Activated CD4-positive, alpha-beta memory T cell treated with anti-CD3 and anti-CD28 coated beads, Interleukin-2, amount 10 ng/mL, durations not matched to agents 7 days and 5 days (primary cell): ENCODE measurements at regions of chr6 and their contacts with region 1.

Region 1: DNA sequence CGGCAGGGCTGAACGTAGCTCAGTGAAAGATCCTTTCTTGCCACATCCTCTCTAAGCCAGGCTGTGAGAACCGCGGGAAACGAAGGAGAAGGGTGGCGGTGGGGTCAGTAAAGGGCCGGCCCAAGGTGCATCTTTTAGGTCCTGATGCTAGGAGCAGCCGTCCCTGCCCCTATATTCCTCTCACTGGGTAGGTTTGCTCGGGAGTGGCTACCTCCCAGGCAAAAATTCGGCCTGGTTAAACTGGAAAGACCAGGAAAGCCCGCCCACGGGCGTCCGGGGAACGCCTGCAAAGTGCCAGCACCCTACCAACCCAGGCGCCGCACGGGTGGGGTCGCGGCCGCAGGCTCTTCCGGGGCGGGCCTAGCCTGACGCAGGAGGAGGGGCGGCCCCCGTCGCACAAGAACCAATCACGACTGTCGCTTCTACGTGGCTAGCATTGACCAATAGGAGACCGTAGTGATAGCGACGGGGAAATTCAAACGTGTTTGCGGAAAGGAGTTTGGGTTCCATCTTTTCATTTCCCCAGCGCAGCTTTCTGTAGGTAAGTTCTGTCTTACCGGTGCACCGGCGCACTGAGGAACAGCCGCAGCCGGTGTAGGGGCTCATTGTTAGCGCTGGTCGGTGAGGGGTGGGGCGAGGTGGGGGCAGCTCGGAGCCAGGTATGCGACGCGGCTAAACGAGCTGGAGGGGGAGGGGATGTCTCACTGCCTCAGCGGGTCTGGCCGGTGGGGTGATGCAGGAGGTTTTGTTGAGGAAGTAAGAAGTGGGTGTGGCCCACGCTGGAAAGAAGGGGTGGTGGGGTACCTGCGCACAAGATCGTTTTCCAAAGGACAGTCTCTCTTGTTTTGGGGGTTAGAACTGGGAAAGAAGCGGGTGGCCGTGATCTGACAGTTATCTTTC is at the start of gene TTK:
- DNase-seq: peak; percentile 94
- H3K4me3 Mint-ChIP-seq: peak within 1 kb of the TSS; percentile 91
- H3K27ac Mint-ChIP-seq: peak within 1 kb of the TSS; percentile 92
- H3K4me1 Mint-ChIP-seq: peaks cover 45% of the 10 kb centered on the region
- H3K27me3 Mint-ChIP-seq: peaks cover 6% of the 10 kb centered on the region
- total RNA-seq, gene TTK: 34.4 to 35.9 TPM

Region 2: GRCh38 chr6:79869600-79870084 is 134.8 kb before region 1 on chr6:
- CTCF ChIA-PET with region 1: interaction called, 10 read pairs
- POLR2A ChIA-PET with region 1: no interaction called
- DNase-seq: peak; percentile 82
- H3K4me3 Mint-ChIP-seq: no peak overlapping the region
- H3K27ac Mint-ChIP-seq: no peak overlapping the region
- H3K4me1 Mint-ChIP-seq: peaks cover 12% of the 10 kb centered on the region
- H3K27me3 Mint-ChIP-seq: peaks cover 9% of the 10 kb centered on the region

Region 3: DNA sequence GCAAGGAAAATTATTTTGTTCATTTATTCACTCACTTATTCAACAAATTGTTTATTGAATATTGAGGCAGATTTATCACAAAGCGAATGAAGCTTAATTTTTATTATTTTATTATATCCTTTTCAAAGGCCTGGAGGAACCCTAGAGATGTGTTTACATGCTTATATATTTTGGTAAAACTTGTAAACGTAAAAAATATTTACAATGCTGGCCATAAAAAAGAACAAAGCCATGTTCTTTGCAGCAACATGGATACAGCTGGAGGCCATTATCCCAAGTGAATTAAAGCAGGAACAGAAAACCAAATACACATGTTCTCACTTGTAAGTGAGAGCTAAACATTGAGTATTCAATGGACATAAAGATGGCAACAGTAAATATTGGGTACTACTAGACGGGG is 115.8 kb before region 1 on chr6:
- CTCF ChIA-PET with region 1: no interaction called
- POLR2A ChIA-PET with region 1: no interaction called
- DNase-seq: no peak
- H3K4me3 Mint-ChIP-seq: no peak overlapping the region
- H3K27ac Mint-ChIP-seq: no peak overlapping the region
- H3K4me1 Mint-ChIP-seq: no peaks in the 10 kb centered on the region
- H3K27me3 Mint-ChIP-seq: peaks cover 20% of the 10 kb centered on the region

Region 4: GRCh38 chr6:79949233-79949632 is 55.2 kb before region 1 on chr6:
- CTCF ChIA-PET with region 1: interaction called, 11 read pairs
- POLR2A ChIA-PET with region 1: interaction called, 12 read pairs
- DNase-seq: peak; percentile 68
- H3K4me3 Mint-ChIP-seq: no peak overlapping the region
- H3K27ac Mint-ChIP-seq: no peak overlapping the region
- H3K4me1 Mint-ChIP-seq: peaks cover 25% of the 10 kb centered on the region
- H3K27me3 Mint-ChIP-seq: peaks cover 37% of the 10 kb centered on the region

Region 5: GRCh38 chr6:79964607-79965081 is 39.8 kb before region 1 on chr6:
- CTCF ChIA-PET with region 1: no interaction called
- POLR2A ChIA-PET with region 1: interaction called, 12 read pairs
- DNase-seq: no peak
- H3K4me3 Mint-ChIP-seq: no peak overlapping the region
- H3K27ac Mint-ChIP-seq: no peak overlapping the region
- H3K4me1 Mint-ChIP-seq: peaks cover 11% of the 10 kb centered on the region
- H3K27me3 Mint-ChIP-seq: peaks cover 17% of the 10 kb centered on the region

Region 6: DNA sequence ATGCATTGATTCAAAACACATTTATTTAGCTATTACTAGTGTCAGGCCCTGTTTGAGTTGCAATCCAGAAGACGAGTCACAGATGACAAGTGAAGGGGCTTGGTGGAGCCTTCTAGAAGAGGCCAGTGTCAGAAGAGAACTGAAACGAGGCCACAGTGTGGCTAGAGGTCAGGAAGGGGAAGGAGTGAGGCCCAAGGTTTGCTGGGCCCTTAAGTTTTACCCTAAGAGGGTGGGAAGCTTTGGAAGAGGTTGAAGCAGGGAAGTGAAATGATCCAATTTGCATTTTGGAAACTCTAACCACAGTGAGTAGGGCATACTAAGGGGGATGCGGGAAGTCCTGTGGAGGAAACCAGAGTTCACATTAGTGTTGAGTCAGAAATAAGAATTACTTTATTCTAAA is 25.0 kb after region 1 on chr6:
- CTCF ChIA-PET with region 1: no interaction called
- POLR2A ChIA-PET with region 1: interaction called, 11 read pairs
- DNase-seq: no peak
- H3K4me3 Mint-ChIP-seq: no peak overlapping the region
- H3K27ac Mint-ChIP-seq: no peak overlapping the region
- H3K4me1 Mint-ChIP-seq: peaks cover 5% of the 10 kb centered on the region
- H3K27me3 Mint-ChIP-seq: no peaks in the 10 kb centered on the region

Region 7: DNA sequence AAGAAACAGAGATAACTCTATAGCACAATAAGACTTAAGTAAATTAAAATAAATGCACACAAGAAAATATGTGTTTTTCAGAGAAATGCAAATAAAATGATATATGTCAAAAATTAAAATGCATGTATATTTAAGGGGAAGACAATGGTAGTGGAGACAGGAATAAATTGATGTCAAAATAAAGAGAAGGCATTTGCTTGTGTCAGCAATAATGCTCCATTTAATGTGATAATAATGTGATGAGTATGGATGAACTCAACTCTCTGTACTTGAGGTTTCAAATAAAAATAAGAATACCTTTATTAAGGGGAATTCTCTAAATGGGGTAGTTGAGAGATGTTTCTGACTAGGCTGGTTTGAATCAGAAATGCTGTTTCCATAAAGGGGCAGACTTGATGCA is 56.4 kb after region 1 on chr6:
- CTCF ChIA-PET with region 1: no interaction called
- POLR2A ChIA-PET with region 1: no interaction called
- DNase-seq: no peak
- H3K4me3 Mint-ChIP-seq: no peak overlapping the region
- H3K27ac Mint-ChIP-seq: no peak overlapping the region
- H3K4me1 Mint-ChIP-seq: no peaks in the 10 kb centered on the region
- H3K27me3 Mint-ChIP-seq: no peaks in the 10 kb centered on the region

Region 8: DNA sequence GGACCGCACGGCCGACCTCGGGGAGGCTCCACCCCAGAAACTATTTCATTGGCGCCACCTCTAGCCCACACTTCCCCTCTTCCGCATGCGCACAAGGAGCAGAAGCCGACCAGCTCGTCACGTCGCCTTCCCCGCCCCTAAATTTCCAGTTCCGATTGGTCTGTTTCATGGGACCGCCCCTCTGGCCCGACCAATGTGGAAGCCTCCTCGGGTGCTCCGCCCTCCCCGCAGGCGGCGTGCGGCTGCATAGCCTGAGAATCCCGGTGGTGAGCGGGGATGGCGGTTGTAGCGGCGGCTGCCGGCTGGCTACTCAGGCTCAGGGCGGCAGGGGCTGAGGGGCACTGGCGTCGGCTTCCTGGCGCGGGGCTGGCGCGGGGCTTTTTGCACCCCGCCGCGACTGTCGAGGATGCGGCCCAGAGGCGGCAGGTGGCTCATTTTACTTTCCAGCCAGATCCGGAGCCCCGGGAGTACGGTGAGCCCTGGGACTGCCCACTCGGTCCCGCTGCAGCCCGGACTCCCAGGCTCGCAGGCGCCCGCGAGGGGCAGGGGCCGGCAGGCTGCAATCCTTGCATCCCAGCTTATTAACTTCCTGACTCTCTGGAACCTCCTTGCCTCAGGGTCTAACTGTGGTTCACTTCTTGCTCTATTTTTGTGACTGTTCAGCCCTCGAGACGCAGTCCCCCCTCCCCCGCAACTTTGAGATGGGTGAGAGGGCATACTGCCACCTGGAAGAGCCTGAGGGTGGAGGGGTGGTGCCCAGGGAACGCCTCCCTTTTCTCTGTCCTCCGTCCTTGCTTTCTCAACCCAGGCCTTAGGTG is 102.2 kb after region 1 on chr6 and contains the start of gene BCKDHB:
- CTCF ChIA-PET with region 1: interaction called, 3 read pairs
- POLR2A ChIA-PET with region 1: interaction called, 14 read pairs
- DNase-seq: peak; percentile 98
- H3K4me3 Mint-ChIP-seq: peak within 1 kb of the TSS; percentile 90
- H3K27ac Mint-ChIP-seq: peak within 1 kb of the TSS; percentile 72
- H3K4me1 Mint-ChIP-seq: peaks cover 23% of the 10 kb centered on the region
- H3K27me3 Mint-ChIP-seq: peaks cover 11% of the 10 kb centered on the region
- total RNA-seq, gene BCKDHB: 13.5 to 16.5 TPM